Mammary epithelial cell (primary cell): ENCODE measurements at regions of chr2 and their contacts with region 1.

Region 1: DNA sequence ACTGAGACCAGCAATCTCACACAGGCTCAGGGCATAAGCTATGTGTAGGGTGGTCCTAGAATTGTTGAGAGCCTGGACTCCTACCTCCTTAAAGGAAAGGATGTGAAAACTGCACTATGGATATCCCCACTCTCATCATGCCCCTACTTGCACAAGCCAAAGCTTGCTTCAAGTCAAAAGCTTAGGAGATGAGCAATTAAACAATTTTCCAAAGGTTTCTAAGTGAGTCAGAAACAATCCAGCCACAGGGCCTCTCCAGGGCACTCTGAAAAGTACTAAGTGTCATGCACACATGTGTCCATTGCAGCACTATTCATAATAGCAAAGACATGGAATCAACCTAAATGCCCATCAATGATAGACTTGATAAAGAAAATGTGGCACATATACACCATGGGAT is 215.4 kb downstream of the AFF3 start:
- DNase-seq: peak; percentile 83
- H3K4me3 ChIP-seq: no peak overlapping the region
- H3K27ac ChIP-seq: no peak overlapping the region
- H3K4me1 ChIP-seq: peaks cover 10% of the 10 kb centered on the region
- H3K27me3 ChIP-seq: no peaks in the 10 kb centered on the region
- CTCF ChIP-seq: no peak

Region 2: GRCh38 chr2:99389371-99389770 is 537.6 kb before region 1 on chr2:
- CTCF ChIA-PET with region 1: no interaction called
- dilution Hi-C with region 1: no loop called
- in situ Hi-C with region 1: no loop called
- intact Hi-C with region 1: no loop called
- DNase-seq: no peak
- H3K4me3 ChIP-seq: no peak overlapping the region
- H3K27ac ChIP-seq: no peak overlapping the region
- H3K4me1 ChIP-seq: no peaks in the 10 kb centered on the region
- H3K27me3 ChIP-seq: no peaks in the 10 kb centered on the region
- CTCF ChIP-seq: no peak

Region 3: DNA sequence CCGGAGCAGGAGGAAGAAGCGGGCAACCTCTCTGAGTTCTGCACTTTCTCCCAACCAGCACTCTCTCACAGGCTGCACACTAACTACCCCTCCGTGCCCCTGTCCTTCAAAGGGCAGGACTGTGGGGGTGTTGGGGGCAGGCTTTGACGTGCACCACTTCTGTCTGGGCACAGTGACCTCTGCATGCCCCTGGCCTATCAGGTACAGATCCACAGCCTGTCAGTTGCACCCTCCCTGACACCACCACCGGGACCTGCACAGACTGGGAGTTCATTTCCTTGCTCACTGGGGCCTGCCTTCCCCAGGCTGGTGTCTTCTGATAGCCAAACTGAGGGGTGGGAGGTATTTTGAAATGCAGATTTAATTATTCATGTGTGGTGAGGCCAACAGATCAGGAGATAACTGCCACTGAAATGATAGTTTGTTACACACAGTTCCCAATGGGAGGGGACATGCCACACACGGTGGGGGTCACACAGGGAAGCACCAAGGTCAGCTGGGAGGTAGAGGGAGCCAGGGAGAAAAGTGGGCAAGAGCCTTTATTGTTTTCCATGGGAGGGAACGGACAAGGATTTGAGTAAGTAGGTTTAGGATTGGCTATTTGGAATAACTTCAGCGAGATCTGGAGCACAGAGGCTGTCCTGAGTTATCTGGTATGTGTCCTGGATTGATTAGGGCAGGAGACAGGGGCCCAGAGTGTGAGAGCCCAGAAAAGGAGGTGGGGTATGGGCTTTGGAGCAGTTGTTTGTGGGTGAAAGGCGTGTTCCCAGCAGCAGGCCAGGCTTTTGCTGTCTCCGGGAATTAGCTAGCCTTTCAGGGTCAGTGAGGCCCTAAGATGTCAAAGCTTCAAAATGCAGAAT is 36.2 kb before region 1 on chr2:
- CTCF ChIA-PET with region 1: no interaction called
- dilution Hi-C with region 1: loop called (anchors 5 kb)
- in situ Hi-C with region 1: no loop called
- intact Hi-C with region 1: no loop called
- DNase-seq: no peak
- H3K4me3 ChIP-seq: no peak overlapping the region
- H3K27ac ChIP-seq: no peak overlapping the region
- H3K4me1 ChIP-seq: no peaks in the 10 kb centered on the region
- H3K27me3 ChIP-seq: no peaks in the 10 kb centered on the region
- CTCF ChIP-seq: no peak

Region 4: DNA sequence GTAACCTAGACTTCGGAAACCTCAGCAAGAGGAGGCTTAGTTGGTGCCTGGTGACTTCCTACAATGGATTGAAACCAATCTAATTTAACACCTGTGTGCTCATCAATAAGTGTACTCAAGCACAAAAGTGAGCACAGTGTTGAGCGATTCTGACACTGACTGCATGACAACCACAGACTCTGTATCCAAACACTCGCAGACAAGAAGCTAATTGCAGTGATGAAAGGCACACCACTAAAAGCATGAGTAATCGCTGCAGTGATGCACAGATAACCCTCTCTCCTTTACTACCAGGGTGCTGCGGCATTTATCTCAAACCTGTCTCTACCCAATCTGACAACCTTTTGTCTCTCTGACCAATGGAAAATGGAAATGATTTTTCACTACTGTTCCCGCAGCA is 47.3 kb after region 1 on chr2:
- CTCF ChIA-PET with region 1: no interaction called
- dilution Hi-C with region 1: loop called (anchors 5 kb)
- in situ Hi-C with region 1: no loop called
- intact Hi-C with region 1: no loop called
- DNase-seq: peak; percentile 19
- H3K4me3 ChIP-seq: no peak overlapping the region
- H3K27ac ChIP-seq: no peak overlapping the region
- H3K4me1 ChIP-seq: peaks cover 35% of the 10 kb centered on the region
- H3K27me3 ChIP-seq: no peaks in the 10 kb centered on the region
- CTCF ChIP-seq: no peak